GM12878 (cell line): ENCODE measurements at regions of chr11 and their contacts with region 1.

Region 1: DNA sequence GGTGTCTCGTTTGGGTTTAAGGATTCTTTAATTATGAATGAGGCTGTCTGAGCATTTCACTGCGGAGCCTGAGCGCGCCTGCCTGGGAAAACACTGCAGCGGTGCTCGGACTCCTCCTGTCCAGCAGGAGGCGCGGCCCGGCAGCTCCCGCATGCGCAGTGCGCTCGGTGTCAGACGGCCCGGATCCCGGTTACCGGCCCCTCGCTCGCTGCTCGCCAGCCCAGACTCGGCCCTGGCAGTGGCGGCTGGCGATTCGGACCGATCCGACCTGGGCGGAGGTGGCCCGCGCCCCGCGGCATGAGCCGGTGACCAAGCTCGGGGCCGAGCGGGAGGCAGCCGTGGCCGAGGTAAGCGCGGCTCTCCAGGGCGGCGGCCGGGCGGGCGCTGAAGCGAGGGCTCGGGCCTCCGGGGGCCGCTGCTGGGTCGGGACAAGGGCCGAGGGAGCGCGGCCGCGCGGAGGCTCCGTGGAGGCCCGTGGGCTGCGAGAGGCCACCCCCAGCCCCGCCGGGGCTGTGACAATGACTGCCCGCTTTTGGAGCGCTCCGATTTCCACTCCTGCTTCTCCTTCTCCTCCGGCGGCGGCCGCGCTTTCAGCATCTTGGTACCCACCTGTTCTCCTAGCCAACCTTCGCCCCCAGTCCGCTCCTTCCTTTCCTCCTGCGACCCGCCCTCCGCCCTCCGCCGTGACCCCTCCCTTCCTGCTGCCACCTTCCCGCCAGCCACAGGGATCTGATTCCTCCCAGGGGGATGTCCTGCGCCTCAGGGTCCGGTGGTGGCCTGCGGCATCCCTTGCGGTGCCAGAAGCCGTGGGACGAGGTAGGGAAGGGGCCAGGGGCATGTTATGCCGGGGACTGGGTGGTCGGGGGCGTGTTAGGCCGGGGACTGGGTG is at the start of gene EXT2:
- DNase-seq: no peak
- ATAC-seq: peak; percentile 96
- H3K4me3 ChIP-seq: peak within 1 kb of the TSS; percentile 85
- H3K27ac ChIP-seq: no peak within 1 kb of the TSS
- H3K4me1 ChIP-seq: no peaks in the 10 kb centered on the region; the same call in 1 of the 2 replicates
- H3K27me3 ChIP-seq: no peaks in the 10 kb centered on the region; a peak in 1 of 4 replicates
- CTCF ChIP-seq: peak; percentile 87 to 93 (median 92)
- EP300 ChIP-seq: no peak
- POLR2A ChIP-seq: peak; percentile 77
- RAD21 ChIP-seq: no peak
- polyA plus RNA-seq, gene EXT2: 3.8 to 6.6 TPM

Region 2: DNA sequence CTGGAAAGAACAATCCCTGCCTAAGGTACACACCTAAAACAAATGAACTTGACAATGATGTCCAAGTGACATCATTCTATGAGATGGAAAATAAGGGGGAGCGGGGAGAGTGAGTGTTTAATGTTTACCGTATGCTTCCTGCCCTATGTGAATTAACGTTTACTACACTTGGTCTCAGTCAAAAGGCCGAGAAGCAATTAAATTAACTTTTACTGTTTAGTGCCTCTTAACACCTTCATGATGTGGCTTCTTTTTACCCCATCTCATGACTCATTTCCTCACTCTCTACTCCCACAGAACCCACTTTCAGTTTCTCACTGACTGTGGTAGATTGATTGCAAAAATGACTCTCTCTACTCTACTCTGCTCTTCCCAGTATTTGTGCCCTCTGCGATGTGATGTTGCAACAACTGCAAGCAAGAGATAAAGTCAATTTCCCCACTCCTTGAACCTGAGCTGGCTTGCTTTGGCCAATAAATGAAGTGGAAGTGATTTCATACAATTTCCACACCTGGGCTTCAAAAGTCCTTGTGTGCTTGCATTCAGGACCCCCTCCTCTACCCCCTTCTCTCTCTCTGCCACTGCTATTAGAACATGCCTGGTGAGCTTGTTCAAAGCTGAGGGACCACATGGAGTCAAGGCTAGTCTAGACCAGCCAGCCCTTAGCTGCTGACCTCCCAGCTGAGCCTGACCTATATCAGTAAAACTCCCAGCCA is 226.7 kb before region 1 on chr11:
- CTCF ChIA-PET with region 1: no interaction called
- POLR2A ChIA-PET with region 1: no interaction called
- RAD21 ChIA-PET with region 1: no interaction called
- SMC1A ChIA-PET with region 1: no interaction called
- in situ Hi-C with region 1: no loop called
- intact Hi-C with region 1: no loop called
- DNase-seq: peak; percentile 84
- ATAC-seq: peak; percentile 100
- H3K4me3 ChIP-seq: no peak overlapping the region
- H3K27ac ChIP-seq: no peak overlapping the region
- H3K4me1 ChIP-seq: peaks cover 10% of the 10 kb centered on the region
- H3K27me3 ChIP-seq: peaks cover 5 to 6% of the 10 kb centered on the region in 2 experiments; a peak in 3 of 4 replicates
- CTCF ChIP-seq: no peak
- EP300 ChIP-seq: peak; percentile 89 to 99
- POLR2A ChIP-seq: no peak
- RAD21 ChIP-seq: no peak

Region 3: DNA sequence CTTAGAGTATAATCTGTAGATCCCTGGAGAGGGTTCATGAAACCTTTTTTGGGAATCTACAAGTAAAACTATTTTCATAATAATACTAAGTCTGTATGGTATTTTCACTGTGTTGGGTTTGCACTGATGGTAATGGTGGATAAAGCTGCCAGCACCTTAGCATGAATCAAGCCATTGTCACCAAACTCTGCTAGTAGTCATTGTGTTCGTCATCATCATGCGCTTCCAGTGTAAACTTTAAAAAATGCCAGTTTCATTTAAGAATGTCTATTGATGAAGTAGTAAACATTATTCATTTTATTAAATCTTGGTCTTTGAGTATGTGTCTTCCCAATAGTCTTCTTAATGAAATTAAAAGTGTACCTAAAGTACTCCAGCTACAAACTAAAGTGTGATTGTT is 200.1 kb before region 1 on chr11:
- CTCF ChIA-PET with region 1: interaction called, 13 read pairs
- POLR2A ChIA-PET with region 1: no interaction called
- RAD21 ChIA-PET with region 1: no interaction called
- SMC1A ChIA-PET with region 1: no interaction called
- in situ Hi-C with region 1: no loop called
- intact Hi-C with region 1: no loop called
- DNase-seq: no peak
- ATAC-seq: no peak
- H3K4me3 ChIP-seq: no peak overlapping the region
- H3K27ac ChIP-seq: no peak overlapping the region
- H3K4me1 ChIP-seq: no peaks in the 10 kb centered on the region
- H3K27me3 ChIP-seq: no peaks in the 10 kb centered on the region
- CTCF ChIP-seq: no peak
- EP300 ChIP-seq: no peak
- POLR2A ChIP-seq: no peak
- RAD21 ChIP-seq: no peak

Region 4: GRCh38 chr11:44085330-44085729 is 10.4 kb before region 1 on chr11:
- CTCF ChIA-PET with region 1: interaction called, 19 read pairs
- POLR2A ChIA-PET with region 1: no interaction called
- RAD21 ChIA-PET with region 1: no interaction called
- SMC1A ChIA-PET with region 1: interaction called, 9 read pairs
- in situ Hi-C with region 1: no loop called
- intact Hi-C with region 1: no loop called
- DNase-seq: no peak
- ATAC-seq: no peak
- H3K4me3 ChIP-seq: no peak overlapping the region
- H3K27ac ChIP-seq: no peak overlapping the region
- H3K4me1 ChIP-seq: no peaks in the 10 kb centered on the region
- H3K27me3 ChIP-seq: no peaks in the 10 kb centered on the region
- CTCF ChIP-seq: no peak
- EP300 ChIP-seq: no peak
- POLR2A ChIP-seq: no peak
- RAD21 ChIP-seq: no peak

Region 5: DNA sequence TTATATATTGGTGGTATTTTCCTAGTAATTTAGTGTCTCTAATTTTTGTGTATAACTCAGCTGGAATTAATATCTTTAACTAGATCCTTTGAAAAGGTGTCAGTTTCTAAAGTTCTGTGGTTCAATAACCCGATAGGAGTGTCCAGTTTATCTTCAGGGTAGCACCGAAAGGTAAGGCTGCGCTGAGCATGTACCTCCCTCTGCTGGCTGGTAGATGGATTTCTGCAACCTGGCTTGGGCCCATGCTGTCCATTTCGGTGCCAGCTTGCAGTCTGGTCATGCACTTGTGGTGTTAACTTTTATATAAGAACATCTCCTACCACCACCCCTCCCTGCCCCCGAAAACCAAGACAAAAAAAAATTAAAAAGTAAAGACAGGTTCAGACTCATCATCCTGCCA is 24.4 kb after region 1 on chr11:
- CTCF ChIA-PET with region 1: interaction called, 11 read pairs
- POLR2A ChIA-PET with region 1: no interaction called
- RAD21 ChIA-PET with region 1: interaction called, 3 read pairs
- SMC1A ChIA-PET with region 1: interaction called, 10 read pairs
- in situ Hi-C with region 1: no loop called
- intact Hi-C with region 1: no loop called
- DNase-seq: no peak
- ATAC-seq: peak; percentile 59; the same call in 2 of the 3 replicates
- H3K4me3 ChIP-seq: no peak overlapping the region
- H3K27ac ChIP-seq: no peak overlapping the region
- H3K4me1 ChIP-seq: no peaks in the 10 kb centered on the region
- H3K27me3 ChIP-seq: no peaks in the 10 kb centered on the region
- CTCF ChIP-seq: peak in 1 of 3 experiments; percentile 20; a peak in 1 of 6 replicates
- EP300 ChIP-seq: no peak
- POLR2A ChIP-seq: no peak
- RAD21 ChIP-seq: no peak

Region 6: DNA sequence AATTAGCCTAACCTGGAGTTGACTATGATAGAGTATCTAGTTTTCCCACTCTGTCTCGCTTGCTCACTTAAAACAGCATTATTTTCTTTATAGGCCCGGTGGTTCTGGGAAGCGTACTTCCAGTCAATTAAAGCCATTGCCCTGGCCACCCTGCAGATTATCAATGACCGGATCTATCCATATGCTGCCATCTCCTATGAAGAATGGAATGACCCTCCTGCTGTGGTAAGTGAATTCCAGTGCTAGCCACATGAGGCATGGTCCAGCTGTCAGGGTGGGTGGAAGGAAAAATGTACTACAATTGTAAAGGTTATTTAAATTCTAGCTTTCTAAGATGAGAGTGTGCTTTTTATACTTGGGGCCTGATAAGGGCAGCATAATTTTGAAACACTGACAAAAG is 75.8 kb after region 1 on chr11:
- CTCF ChIA-PET with region 1: no interaction called
- POLR2A ChIA-PET with region 1: no interaction called
- RAD21 ChIA-PET with region 1: no interaction called
- SMC1A ChIA-PET with region 1: no interaction called
- in situ Hi-C with region 1: no loop called
- intact Hi-C with region 1: no loop called
- DNase-seq: no peak
- ATAC-seq: no peak
- H3K4me3 ChIP-seq: no peak overlapping the region
- H3K27ac ChIP-seq: no peak overlapping the region
- H3K4me1 ChIP-seq: no peaks in the 10 kb centered on the region
- H3K27me3 ChIP-seq: no peaks in the 10 kb centered on the region
- CTCF ChIP-seq: no peak
- EP300 ChIP-seq: no peak
- POLR2A ChIP-seq: no peak
- RAD21 ChIP-seq: no peak

Region 7: GRCh38 chr11:44260081-44260480 is 164.3 kb after region 1 on chr11:
- CTCF ChIA-PET with region 1: no interaction called
- POLR2A ChIA-PET with region 1: no interaction called
- RAD21 ChIA-PET with region 1: no interaction called
- SMC1A ChIA-PET with region 1: no interaction called
- in situ Hi-C with region 1: no loop called
- intact Hi-C with region 1: no loop called
- DNase-seq: no peak
- ATAC-seq: no peak
- H3K4me3 ChIP-seq: no peak overlapping the region
- H3K27ac ChIP-seq: no peak overlapping the region
- H3K4me1 ChIP-seq: peaks cover 4% of the 10 kb centered on the region
- H3K27me3 ChIP-seq: no peaks in the 10 kb centered on the region
- CTCF ChIP-seq: no peak
- EP300 ChIP-seq: no peak
- POLR2A ChIP-seq: no peak
- RAD21 ChIP-seq: no peak

Region 8: DNA sequence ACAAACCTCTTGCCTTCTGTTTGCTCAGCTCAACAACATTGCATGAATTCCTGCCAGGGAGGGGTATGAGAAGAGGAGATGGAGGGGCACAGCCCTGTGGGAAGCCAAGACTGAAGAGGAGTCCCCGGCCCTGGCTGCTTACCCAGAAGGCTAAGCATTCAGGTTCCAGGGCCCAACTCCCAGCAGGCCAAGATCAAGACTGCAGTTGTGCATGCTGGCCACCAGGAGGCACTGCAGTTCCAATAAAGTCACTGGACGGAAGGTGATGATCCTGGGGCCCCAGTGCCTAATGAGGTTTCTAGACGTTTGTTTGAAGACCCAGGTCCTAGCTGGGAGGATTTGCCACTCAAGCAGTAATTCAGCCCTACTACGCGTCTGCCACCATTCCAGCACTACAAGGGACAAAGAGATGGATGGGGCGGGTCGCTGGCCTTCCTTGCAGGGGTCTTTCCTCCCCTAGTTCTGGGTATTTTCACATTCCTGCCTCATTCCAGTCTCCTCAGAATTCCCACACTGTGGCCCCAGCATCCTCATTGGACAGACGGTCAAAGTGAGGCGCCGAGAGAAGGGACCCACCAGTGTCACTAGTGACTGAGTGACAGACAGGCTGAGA is 190.6 kb after region 1 on chr11:
- CTCF ChIA-PET with region 1: interaction called, 12 read pairs
- POLR2A ChIA-PET with region 1: no interaction called
- RAD21 ChIA-PET with region 1: interaction called, 4 read pairs
- SMC1A ChIA-PET with region 1: interaction called, 5 read pairs
- in situ Hi-C with region 1: no loop called
- intact Hi-C with region 1: no loop called
- DNase-seq: peak; percentile 2
- ATAC-seq: peak; percentile 91
- H3K4me3 ChIP-seq: no peak overlapping the region
- H3K27ac ChIP-seq: no peak overlapping the region
- H3K4me1 ChIP-seq: no peaks in the 10 kb centered on the region
- H3K27me3 ChIP-seq: no peaks in the 10 kb centered on the region; a peak in 1 of 4 replicates
- CTCF ChIP-seq: peak; percentile 83 to 99 (median 96); a peak in 5 of 6 replicates
- EP300 ChIP-seq: no peak
- POLR2A ChIP-seq: no peak
- RAD21 ChIP-seq: peak; percentile 96